ENCODE measurements at regions of chr2 and their contacts with region 1.

Region 1: DNA sequence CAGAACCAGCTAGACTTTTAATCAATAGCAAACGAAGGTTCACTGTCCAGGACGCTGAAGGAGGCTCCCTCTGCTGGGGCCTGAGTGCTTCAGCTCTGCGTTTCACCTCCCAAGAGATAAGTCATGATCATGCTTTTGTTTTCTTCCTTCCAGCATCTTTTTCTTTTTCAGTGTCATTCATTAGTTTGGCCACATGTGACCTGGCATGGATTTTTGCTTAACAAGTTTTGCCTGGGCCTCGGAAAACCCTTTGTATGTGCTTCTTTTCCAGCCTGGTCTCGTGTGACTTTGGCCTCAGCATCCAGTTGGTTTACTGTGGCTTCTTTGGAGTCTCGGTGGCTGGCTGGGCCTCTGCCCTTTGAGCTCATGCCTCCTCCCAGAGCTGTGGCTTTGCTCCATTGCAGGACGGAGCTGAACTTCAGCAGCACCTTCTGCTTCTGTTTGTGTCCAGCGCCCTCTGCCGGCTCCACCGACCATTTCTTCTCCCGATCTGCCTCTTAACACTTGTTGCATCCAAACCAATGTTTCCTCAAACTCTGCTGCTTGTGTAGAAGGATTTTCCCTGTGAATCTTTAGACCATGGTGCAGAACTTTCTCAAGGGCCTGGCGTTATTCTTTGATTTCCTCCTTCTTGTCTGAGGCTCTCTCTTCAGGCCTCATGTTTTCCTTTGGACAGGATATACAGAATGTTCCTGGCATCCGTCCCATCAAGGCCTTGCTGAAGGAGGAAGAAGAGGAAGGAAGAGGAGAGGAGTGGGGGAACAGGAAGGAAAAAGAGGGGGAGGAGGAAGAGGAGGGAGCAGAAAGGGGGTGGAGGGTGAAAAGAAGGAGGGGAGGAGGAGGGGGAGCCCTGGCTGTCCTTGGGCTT is 23.6 kb upstream of the HES6 start:
- DNase-seq: peak; percentile 94
- ATAC-seq: peak; percentile 85

Region 2: GRCh38 chr2:237581751-237582746 is 681.4 kb before region 1 on chr2:
- intact Hi-C with region 1: loop called (anchors 5 kb)
- DNase-seq: peak; percentile 85
- ATAC-seq: peak; percentile 95

Region 3: GRCh38 chr2:238160206-238161109 is 103.0 kb before region 1 on chr2:
- intact Hi-C with region 1: loop called (anchors 10 kb)
- DNase-seq: peak; percentile 54
- ATAC-seq: no peak

Region 4: GRCh38 chr2:238513346-238513745 is 249.9 kb after region 1 on chr2:
- intact Hi-C with region 1: no loop called
- DNase-seq: no peak
- ATAC-seq: no peak